ENCODE measurements at regions of chr12 and their contacts with region 1.

Region 1: GRCh38 chr12:112012775-112013600 is at the starts of genes ERP29 and TMEM116:
- DNase-seq: peak; percentile 100
- ATAC-seq: peak; percentile 81
- H3K4me3 ChIP-seq: peak within 1 kb of the TSS; percentile 98
- H3K4me3 Mint-ChIP-seq: peak within 1 kb of the TSS; percentile 97
- H3K27ac ChIP-seq: peak within 1 kb of the TSS; percentile 92 to 96
- H3K27ac Mint-ChIP-seq: peak within 1 kb of the TSS; percentile 100
- H3K4me1 ChIP-seq: peaks cover 58% of the 10 kb centered on the region
- H3K4me1 Mint-ChIP-seq: peaks cover 66% of the 10 kb centered on the region
- H3K27me3 ChIP-seq: no peaks in the 10 kb centered on the region
- H3K27me3 Mint-ChIP-seq: no peaks in the 10 kb centered on the region
- CTCF ChIP-seq: peak; percentile 66
- total RNA-seq, gene ERP29: 109 to 117 TPM
- total RNA-seq, gene TMEM116: 12.7 to 12.8 TPM

Region 2: GRCh38 chr12:111685744-111686517 is 327.1 kb before region 1 on chr12 and contains the starts of genes ACAD10 and BRAP:
- CTCF ChIA-PET with region 1: no interaction called
- POLR2A ChIA-PET with region 1: interaction called, 3 read pairs
- intact Hi-C with region 1: loop called in 1 of 2 experiments (anchors 10 kb)
- DNase-seq: peak; percentile 86 to 97 (median 92)
- ATAC-seq: peak; percentile 83
- H3K4me3 ChIP-seq: peak within 1 kb of the TSS; percentile 92
- H3K4me3 Mint-ChIP-seq: peak within 1 kb of the TSS; percentile 95
- H3K27ac ChIP-seq: peak within 1 kb of the TSS; percentile 46 to 76
- H3K27ac Mint-ChIP-seq: peak within 1 kb of the TSS; percentile 86
- H3K4me1 ChIP-seq: peaks cover 27% of the 10 kb centered on the region
- H3K4me1 Mint-ChIP-seq: peaks cover 46% of the 10 kb centered on the region
- H3K27me3 ChIP-seq: no peaks in the 10 kb centered on the region
- H3K27me3 Mint-ChIP-seq: no peaks in the 10 kb centered on the region
- CTCF ChIP-seq: no peak
- total RNA-seq, gene ACAD10: 15.8 to 17.4 TPM
- total RNA-seq, gene BRAP: 22.4 to 25.8 TPM

Region 3: GRCh38 chr12:111887926-111888745 is 124.9 kb before region 1 on chr12:
- CTCF ChIA-PET with region 1: no interaction called
- POLR2A ChIA-PET with region 1: no interaction called
- intact Hi-C with region 1: no loop called
- DNase-seq: no peak
- ATAC-seq: no peak
- H3K4me3 ChIP-seq: no peak overlapping the region
- H3K4me3 Mint-ChIP-seq: no peak overlapping the region
- H3K27ac ChIP-seq: no peak overlapping the region
- H3K27ac Mint-ChIP-seq: no peak overlapping the region
- H3K4me1 ChIP-seq: no peaks in the 10 kb centered on the region
- H3K4me1 Mint-ChIP-seq: no peaks in the 10 kb centered on the region
- H3K27me3 ChIP-seq: no peaks in the 10 kb centered on the region
- H3K27me3 Mint-ChIP-seq: no peaks in the 10 kb centered on the region
- CTCF ChIP-seq: no peak

Region 4: GRCh38 chr12:111942557-111942956 is 70.4 kb before region 1 on chr12:
- CTCF ChIA-PET with region 1: interaction called, 29 read pairs
- POLR2A ChIA-PET with region 1: interaction called, 45 read pairs
- intact Hi-C with region 1: loop called (anchors 1 kb)
- DNase-seq: no peak
- ATAC-seq: no peak
- H3K4me3 ChIP-seq: no peak overlapping the region
- H3K4me3 Mint-ChIP-seq: no peak overlapping the region
- H3K27ac ChIP-seq: no peak overlapping the region
- H3K27ac Mint-ChIP-seq: no peak overlapping the region
- H3K4me1 ChIP-seq: peaks cover 6% of the 10 kb centered on the region
- H3K4me1 Mint-ChIP-seq: peaks cover 18% of the 10 kb centered on the region
- H3K27me3 ChIP-seq: no peaks in the 10 kb centered on the region
- H3K27me3 Mint-ChIP-seq: no peaks in the 10 kb centered on the region
- CTCF ChIP-seq: no peak

Region 5: DNA sequence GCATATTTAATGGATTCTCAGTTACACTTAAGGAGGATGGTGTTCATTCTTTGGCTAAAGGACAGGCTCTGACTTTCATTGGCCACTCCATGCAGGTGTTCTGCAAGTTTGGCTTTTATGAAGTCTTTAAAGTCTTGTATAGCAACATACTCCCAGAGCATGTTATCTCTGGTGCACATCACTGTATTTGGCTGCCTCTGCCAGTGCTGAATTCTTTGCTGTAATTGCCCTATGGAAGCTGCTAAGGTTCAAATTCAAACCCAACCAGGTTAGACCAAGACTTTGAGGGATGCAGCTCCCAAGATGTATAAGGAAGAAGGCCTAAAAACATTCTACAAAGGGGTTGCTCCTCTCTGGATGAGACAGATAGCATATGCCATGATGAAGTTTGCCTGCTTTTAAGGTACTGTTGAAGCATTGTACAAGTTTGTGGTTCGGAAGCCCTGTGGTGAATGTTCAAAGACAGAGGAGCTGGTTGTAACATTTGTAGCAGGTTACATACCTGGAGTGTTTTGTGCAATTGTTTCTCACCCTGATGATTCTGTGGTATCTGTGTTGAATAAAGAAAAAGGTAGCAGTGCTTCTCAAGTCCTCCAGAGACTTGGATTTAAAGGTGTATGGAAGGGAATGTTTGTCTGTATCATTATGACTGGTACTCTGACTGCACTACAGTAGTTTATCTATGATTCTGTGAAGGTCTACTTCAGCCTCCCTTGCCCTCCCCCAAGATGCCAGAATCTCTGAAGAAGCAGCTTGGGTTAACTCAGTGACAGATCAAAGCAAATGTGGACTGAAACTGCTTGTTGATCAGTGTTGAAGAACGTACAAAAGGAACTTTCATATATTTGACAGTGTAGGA is 19.5 kb before region 1 on chr12:
- CTCF ChIA-PET with region 1: interaction called, 28 read pairs
- POLR2A ChIA-PET with region 1: interaction called, 351 read pairs
- intact Hi-C with region 1: loop called (anchors 1 to 2 kb)
- DNase-seq: peak in 7 of 14 experiments; percentile 18 to 72 (median 52)
- ATAC-seq: peak; percentile 78
- H3K4me3 ChIP-seq: peak overlapping the region; percentile 57
- H3K4me3 Mint-ChIP-seq: peak overlapping the region; percentile 81
- H3K27ac ChIP-seq: peak overlapping the region; percentile 31 to 44
- H3K27ac Mint-ChIP-seq: peak overlapping the region; percentile 86
- H3K4me1 ChIP-seq: peaks cover 56% of the 10 kb centered on the region
- H3K4me1 Mint-ChIP-seq: peaks cover 80% of the 10 kb centered on the region
- H3K27me3 ChIP-seq: no peaks in the 10 kb centered on the region
- H3K27me3 Mint-ChIP-seq: no peaks in the 10 kb centered on the region
- CTCF ChIP-seq: no peak

Region 6: GRCh38 chr12:112061137-112061536 is 48.1 kb after region 1 on chr12:
- CTCF ChIA-PET with region 1: no interaction called
- POLR2A ChIA-PET with region 1: no interaction called
- intact Hi-C with region 1: no loop called
- DNase-seq: no peak
- ATAC-seq: no peak
- H3K4me3 ChIP-seq: no peak overlapping the region
- H3K4me3 Mint-ChIP-seq: no peak overlapping the region
- H3K27ac ChIP-seq: no peak overlapping the region
- H3K27ac Mint-ChIP-seq: no peak overlapping the region
- H3K4me1 ChIP-seq: no peaks in the 10 kb centered on the region
- H3K4me1 Mint-ChIP-seq: no peaks in the 10 kb centered on the region
- H3K27me3 ChIP-seq: no peaks in the 10 kb centered on the region
- H3K27me3 Mint-ChIP-seq: no peaks in the 10 kb centered on the region
- CTCF ChIP-seq: no peak

Region 7: GRCh38 chr12:112108201-112109079 is 95.5 kb after region 1 on chr12 and contains the start of gene NAA25:
- CTCF ChIA-PET with region 1: interaction called, 3 read pairs
- POLR2A ChIA-PET with region 1: interaction called, 11 read pairs
- intact Hi-C with region 1: loop called (anchors 5 kb)
- DNase-seq: peak; percentile 76 to 93 (median 83)
- ATAC-seq: peak; percentile 82
- H3K4me3 ChIP-seq: peak within 1 kb of the TSS; percentile 95
- H3K4me3 Mint-ChIP-seq: peak within 1 kb of the TSS; percentile 95
- H3K27ac ChIP-seq: peak within 1 kb of the TSS; percentile 85 to 86
- H3K27ac Mint-ChIP-seq: peak within 1 kb of the TSS; percentile 94
- H3K4me1 ChIP-seq: peaks cover 28% of the 10 kb centered on the region
- H3K4me1 Mint-ChIP-seq: peaks cover 50% of the 10 kb centered on the region
- H3K27me3 ChIP-seq: no peaks in the 10 kb centered on the region
- H3K27me3 Mint-ChIP-seq: no peaks in the 10 kb centered on the region
- CTCF ChIP-seq: no peak
- total RNA-seq, gene NAA25: 31.1 to 34.6 TPM

Region 8: DNA sequence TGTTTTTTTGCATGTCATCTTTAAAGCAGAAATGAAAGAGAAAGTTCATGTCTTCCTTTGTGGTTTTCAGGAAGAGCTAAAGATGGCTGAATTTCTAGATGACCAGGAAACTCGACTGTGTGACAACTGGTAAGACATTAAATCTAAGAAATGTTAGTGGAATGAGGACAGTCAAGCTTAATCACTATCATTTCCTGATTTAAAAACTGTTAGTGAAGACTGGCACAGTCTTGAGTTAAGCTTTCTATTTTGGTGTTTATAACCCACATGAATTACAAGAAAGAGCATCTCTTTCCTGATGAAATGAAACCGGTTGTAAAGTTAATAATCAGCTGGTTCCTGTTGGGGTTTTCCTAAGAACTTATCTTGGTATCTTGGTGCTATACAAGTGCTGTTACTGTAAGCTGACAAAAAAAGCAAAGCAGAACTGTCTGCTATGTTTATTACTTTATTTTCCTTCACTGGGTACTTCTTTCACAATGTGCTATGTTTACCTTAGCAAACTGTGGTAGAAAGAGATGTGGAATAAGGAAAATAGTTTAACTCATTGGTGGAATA is 117.5 kb after region 1 on chr12:
- CTCF ChIA-PET with region 1: no interaction called
- POLR2A ChIA-PET with region 1: interaction called, 14 read pairs
- intact Hi-C with region 1: no loop called
- DNase-seq: peak in 3 of 14 experiments; percentile 78 to 84 (median 82)
- ATAC-seq: peak; percentile 65
- H3K4me3 ChIP-seq: peak overlapping the region; percentile 17
- H3K4me3 Mint-ChIP-seq: peak overlapping the region; percentile 70
- H3K27ac ChIP-seq: peak overlapping the region; percentile 57 to 69
- H3K27ac Mint-ChIP-seq: peak overlapping the region; percentile 76
- H3K4me1 ChIP-seq: peaks cover 47% of the 10 kb centered on the region
- H3K4me1 Mint-ChIP-seq: peaks cover 72% of the 10 kb centered on the region
- H3K27me3 ChIP-seq: no peaks in the 10 kb centered on the region
- H3K27me3 Mint-ChIP-seq: no peaks in the 10 kb centered on the region
- CTCF ChIP-seq: no peak

Region 9: DNA sequence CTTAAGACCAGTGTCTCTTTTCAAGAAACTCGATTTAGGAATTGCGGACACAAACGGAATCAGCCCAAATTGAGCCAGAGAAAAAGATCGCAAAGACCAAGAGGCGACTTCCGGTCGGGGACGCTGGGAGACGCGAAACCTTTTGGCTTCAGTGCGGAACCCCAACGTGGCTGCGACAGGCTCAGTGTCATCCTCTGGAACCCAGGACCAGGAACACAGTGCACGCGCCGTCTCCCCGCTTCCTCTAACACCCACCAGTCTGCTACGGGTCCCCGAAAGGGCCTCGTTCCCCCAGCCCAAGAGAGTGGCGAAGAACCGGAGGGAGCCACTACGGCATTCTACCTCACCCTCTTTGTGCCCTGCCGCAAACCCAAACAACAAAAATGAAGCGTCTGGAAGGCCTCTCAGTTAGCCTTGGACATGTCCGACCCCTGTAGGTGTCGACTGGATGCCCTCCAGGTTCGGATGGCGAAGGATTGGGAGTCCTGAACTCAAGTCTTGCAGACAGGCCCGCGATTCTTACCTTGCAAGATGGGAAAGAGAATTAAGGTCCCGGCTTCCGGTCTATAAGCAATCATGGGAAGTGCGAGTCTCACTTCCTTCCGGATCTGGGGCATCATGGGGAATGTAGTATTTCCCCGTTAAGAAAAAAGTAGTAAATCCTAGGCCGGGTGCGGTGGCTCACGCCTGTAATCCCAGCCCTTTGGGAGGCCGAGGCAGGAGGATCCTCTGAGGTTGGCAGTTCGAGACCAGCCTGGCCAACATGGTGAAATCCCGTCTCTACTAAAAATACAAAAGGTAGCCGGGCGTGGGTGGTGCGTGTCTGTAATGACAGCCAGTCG is 396.3 kb after region 1 on chr12 and contains the start of gene RPL6:
- CTCF ChIA-PET with region 1: no interaction called
- POLR2A ChIA-PET with region 1: no interaction called
- intact Hi-C with region 1: loop called in 1 of 2 experiments (anchors 1 kb)
- DNase-seq: peak; percentile 55 to 92 (median 69)
- ATAC-seq: peak; percentile 86
- H3K4me3 ChIP-seq: peak within 1 kb of the TSS; percentile 81
- H3K4me3 Mint-ChIP-seq: peak within 1 kb of the TSS; percentile 100
- H3K27ac ChIP-seq: peak within 1 kb of the TSS; percentile 80 to 89
- H3K27ac Mint-ChIP-seq: peak within 1 kb of the TSS; percentile 99
- H3K4me1 ChIP-seq: peaks cover 23% of the 10 kb centered on the region
- H3K4me1 Mint-ChIP-seq: peaks cover 34% of the 10 kb centered on the region
- H3K27me3 ChIP-seq: no peaks in the 10 kb centered on the region
- H3K27me3 Mint-ChIP-seq: no peaks in the 10 kb centered on the region
- CTCF ChIP-seq: no peak
- total RNA-seq, gene RPL6: 1,794 to 1,807 TPM